Posterior vena cava (tissue), 2 donors: ENCODE measurements at regions of chr17 and their contacts with region 1.

Region 1: DNA sequence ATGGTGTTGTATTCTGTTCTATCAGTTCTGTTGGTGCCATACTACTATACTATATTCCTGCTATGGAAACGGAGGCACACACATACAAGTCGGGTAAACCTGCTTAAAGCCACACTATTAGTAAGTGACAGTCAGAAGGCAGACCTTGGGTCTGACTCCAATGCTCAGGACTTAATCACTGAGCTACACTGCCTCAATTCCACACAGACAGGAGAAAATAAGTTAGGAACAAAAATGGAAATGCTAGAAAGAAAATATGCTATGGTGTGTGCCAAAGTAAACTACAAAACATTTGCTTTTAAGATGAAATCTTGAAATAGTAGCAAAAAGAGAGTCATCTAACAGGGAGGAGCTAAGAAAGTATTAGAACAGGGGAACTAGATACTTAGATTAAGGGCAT is 48.1 kb downstream of the MYO1D start:
- DNase-seq: no peak

Region 2: GRCh38 chr17:32609085-32609484 is 219.7 kb before region 1 on chr17:
- intact Hi-C with region 1: no loop called
- DNase-seq: no peak

Region 3: DNA sequence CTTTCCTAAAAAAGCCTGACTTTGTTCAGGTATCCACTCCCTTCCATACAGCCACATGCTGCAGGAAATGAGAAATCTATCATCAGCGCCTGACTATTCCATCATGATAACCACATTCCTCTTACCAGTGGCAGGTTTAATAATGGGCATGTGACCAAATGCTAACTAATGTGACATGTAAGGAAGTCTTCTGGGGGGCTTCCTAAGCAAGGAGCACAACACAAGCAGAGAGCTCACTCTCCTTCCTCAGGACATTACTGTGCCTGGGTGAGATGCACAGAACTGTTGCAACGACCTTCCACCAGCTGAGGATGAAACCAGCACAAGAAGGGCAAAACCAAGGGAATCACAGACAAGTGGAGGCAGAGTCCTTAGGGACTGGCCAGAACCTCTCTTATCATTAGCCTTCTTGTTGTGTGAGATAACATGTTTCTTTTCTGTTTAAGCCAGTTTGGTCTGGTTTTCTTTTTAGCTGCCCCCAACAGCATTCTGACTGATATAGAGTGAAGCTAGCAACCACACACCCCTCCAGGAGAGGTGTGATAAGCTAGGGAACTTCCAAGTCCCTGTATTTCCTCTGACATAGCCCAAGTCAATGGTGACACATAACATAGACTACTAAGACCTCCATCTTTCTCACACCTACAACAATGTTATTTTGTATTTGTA is 31.2 kb after region 1 on chr17:
- intact Hi-C with region 1: loop called in 1 of 2 experiments (anchors 5 kb)
- DNase-seq: no peak

Region 4: DNA sequence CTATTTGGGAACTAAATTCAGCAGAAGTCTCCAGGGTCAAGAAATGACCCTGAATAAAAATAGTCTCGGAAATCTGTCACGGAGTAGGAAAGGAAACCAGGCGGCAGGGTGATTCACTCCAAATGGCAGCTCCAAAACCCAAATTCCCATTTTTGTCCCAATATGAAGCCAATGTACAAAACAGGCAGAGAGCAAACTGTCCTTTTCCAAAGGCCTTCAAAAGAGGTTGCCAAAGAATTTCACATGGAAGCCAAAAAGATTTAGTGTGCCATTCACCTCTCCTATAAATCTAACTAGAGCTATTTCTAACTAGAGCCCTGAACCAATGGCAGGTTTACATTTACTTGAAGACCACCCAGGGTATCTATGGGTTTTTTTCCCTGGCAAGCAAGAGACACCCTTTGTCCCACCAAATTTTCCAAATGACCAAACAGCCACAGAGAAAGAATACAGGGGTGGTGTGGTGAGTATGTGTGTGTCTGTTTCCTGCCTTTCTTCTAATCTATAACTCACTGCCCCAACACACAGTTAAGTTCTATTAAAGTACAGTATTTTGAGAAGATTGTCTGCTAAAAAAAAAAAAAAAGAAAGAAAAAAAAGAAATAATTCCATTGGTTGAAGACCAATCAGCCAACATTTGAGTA is 41.3 kb after region 1 on chr17:
- intact Hi-C with region 1: loop called in 1 of 2 experiments (anchors 1 kb)
- DNase-seq: no peak